ENCODE measurements at regions of chr7 and their contacts with region 1.

Region 1: GRCh38 chr7:74401137-74401859 is 52.4 kb upstream of the GTF2IRD1 start:
- DNase-seq: peak; percentile 76
- ATAC-seq: peak; percentile 53

Region 2: GRCh38 chr7:74206589-74207120 is 194.6 kb before region 1 on chr7:
- intact Hi-C with region 1: loop called (anchors 1 kb)
- DNase-seq: peak; percentile 93
- ATAC-seq: peak; percentile 85

Measured in Right ventricle myocardium inferior (tissue), 1 donor.